ENCODE measurements at regions of chr2 and their contacts with region 1.

Region 1: DNA sequence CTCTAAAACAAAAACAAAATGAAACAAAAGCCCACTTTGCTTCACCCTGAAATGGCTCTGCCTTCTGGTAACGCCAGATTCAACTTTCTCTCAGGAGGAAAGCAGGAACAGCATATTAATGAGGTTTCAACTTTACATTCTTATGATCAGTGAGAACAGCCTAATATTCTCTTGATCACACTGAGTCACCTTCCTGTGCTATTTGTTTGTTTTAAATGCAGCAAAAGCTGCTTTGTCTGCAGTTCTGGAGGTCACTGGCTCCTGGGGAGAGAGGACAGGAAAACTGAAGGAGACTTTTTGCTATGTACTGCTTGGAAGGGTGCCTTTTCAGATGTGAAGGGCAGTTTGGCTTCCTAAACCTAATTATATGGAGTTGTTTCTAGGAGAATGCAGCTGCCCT is 48.1 kb downstream of the MAIP1 start:
- DNase-seq: peak; percentile 9
- H3K4me3 Mint-ChIP-seq: no peak overlapping the region
- H3K27ac Mint-ChIP-seq: no peak overlapping the region
- H3K4me1 Mint-ChIP-seq: no peaks in the 10 kb centered on the region
- H3K27me3 Mint-ChIP-seq: no peaks in the 10 kb centered on the region
- CTCF ChIP-seq: no peak

Region 2: DNA sequence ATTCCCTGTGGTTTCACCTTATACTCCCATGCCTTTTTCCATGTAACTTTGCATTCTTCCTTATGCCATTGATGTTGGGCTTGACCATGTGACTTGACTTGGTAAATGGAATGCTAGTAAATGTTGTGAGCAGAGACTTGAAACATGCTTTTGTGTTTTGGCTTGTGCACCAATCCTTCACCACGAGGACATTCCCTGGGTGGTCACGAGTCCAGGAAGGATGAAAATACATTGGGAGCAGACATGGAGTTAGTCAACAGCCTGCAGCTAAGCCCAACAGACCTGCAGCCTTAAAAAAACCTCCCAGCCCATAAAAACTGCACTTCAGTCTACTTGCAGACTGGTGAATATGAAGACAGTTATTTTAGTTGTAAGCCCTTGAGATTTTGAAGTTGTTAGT is 186.5 kb after region 1 on chr2:
- CTCF ChIA-PET with region 1: no interaction called
- POLR2A ChIA-PET with region 1: no interaction called
- intact Hi-C with region 1: loop called (anchors 10 kb)
- DNase-seq: no peak
- H3K4me3 Mint-ChIP-seq: no peak overlapping the region
- H3K27ac Mint-ChIP-seq: no peak overlapping the region
- H3K4me1 Mint-ChIP-seq: no peaks in the 10 kb centered on the region
- H3K27me3 Mint-ChIP-seq: peaks cover 15% of the 10 kb centered on the region
- CTCF ChIP-seq: no peak

Measured in MCF 10A (cell line).